ENCODE measurements at regions of chr13 and their contacts with region 1.

Region 1: GRCh38 chr13:63024458-63024857 is 1608.8 kb upstream of the PCDH20 start:
- DNase-seq: no peak
- ATAC-seq: no peak

Region 2: GRCh38 chr13:62920159-62920558 is 104.3 kb before region 1 on chr13:
- intact Hi-C with region 1: no loop called
- DNase-seq: no peak
- ATAC-seq: no peak

Region 3: GRCh38 chr13:63044589-63045313 is 20.3 kb after region 1 on chr13:
- intact Hi-C with region 1: loop called (anchors 2 kb)
- DNase-seq: no peak
- ATAC-seq: no peak

Measured in Right ventricle myocardium superior (tissue), 1 donor.